ENCODE measurements at regions of chr12 and their contacts with region 1.

Region 1: DNA sequence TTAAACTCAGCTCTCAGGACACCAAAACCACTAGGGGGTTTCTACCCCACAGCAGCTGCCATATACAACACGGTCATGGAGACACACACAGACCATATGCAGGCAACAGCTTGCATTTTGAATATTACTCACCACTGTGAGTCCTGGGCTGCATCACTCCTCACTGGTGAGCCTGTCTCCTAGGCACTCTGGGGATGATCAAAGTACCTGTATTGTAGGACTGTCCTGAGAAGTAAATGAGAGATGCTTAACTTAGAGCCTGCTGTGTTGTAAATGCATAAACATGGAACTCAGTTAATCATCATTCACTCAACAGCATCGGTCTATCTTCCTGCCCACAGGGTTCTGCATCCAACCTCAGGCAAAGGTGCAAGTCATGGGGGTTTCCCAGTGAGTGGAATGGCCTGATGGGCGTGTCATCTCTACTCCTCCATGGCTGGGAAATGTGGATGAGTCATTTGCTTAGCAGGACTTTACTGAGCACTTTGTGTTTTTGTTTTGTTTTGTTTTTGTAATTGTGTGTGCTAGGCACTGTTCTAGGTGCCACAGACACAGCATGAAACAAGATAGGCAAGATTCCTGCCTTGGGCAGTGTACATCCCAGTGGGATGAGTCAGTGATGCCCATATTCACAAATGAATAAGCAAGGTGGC is 1141.2 kb upstream of the TMEM132C start:
- DNase-seq: peak; percentile 100
- H3K4me3 ChIP-seq: peak overlapping the region in 1 of 3 experiments; percentile 23
- H3K27ac ChIP-seq: peak overlapping the region; percentile 99
- H3K4me1 ChIP-seq: peaks cover 27% of the 10 kb centered on the region
- H3K27me3 ChIP-seq: no peaks in the 10 kb centered on the region
- CTCF ChIP-seq: peak in 1 of 2 donors; percentile 17

Region 2: DNA sequence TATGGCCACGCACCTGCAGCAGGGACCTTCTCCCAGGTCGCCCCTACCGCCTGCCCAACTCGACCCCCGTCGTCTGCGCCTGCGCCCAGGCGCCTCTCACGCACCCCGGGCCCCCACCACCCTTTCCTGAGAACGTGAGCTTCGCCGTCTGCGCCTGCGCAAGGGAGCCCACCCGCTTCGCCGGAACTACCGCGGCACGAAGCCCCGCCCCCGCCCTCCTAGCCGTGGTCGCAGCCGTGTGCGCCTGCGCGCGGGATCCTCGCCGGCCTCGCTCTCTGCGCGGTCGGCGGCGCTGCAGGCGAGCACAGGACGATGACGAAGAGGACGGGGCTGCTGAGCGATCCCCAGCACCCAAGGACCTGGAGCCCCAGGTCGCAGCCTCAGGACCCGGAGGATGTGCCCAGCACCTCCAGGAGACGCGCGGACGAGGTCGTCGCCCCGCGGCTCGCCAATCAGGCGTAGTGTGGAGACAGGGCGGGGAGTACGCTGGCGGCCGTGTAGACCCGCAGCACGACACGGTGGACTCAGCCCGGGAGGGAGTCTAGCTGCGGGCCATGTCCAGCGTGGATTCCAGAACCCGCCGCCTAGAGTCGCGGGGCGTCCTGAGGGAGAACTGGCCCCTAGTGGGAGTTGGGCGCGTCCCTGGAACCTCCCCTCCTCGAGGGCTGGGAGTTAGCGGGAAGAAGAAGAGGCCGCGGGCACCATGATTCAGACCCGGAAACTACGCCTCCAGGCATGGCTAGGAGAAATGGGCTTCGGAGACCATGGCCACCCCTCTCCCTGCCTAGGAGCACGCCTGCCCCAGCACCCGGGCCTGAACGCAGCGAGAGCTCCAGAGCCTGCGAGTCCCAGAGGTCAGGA is 20.4 kb after region 1 on chr12:
- CTCF ChIA-PET with region 1: no interaction called
- dilution Hi-C with region 1: no loop called
- in situ Hi-C with region 1: no loop called
- intact Hi-C with region 1: loop called (anchors 2 kb)
- DNase-seq: peak; percentile 46
- H3K4me3 ChIP-seq: peak overlapping the region; percentile 6 to 73 (median 55)
- H3K27ac ChIP-seq: peak overlapping the region; percentile 35
- H3K4me1 ChIP-seq: peaks cover 12% of the 10 kb centered on the region
- H3K27me3 ChIP-seq: no peaks in the 10 kb centered on the region
- CTCF ChIP-seq: peak in 1 of 2 donors; percentile 25

Region 3: DNA sequence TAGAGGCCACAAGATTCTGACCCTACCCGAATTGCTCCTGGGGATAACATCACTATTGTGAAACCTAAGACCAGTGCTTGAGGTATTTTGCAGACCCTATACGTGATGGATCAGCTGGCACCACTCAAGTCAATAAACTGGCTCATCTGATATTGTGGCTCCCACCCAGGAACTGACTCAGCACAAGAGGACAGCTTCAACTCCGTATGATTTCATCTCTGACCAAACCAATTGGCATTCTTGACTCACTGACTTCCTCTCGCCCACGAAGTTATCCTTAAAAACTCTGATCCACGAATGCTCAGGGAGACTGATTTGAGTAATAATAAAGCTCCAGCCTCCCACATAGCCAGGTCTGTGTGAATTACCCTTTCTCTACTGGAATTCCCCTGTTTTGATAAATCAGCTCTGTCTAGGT is 105.1 kb after region 1 on chr12:
- CTCF ChIA-PET with region 1: no interaction called
- dilution Hi-C with region 1: no loop called
- in situ Hi-C with region 1: no loop called
- intact Hi-C with region 1: loop called (anchors 1 kb)
- DNase-seq: peak; percentile 99
- H3K4me3 ChIP-seq: no peak overlapping the region
- H3K27ac ChIP-seq: peak overlapping the region; percentile 88
- H3K4me1 ChIP-seq: peaks cover 35% of the 10 kb centered on the region
- H3K27me3 ChIP-seq: no peaks in the 10 kb centered on the region
- CTCF ChIP-seq: no peak

Region 4: DNA sequence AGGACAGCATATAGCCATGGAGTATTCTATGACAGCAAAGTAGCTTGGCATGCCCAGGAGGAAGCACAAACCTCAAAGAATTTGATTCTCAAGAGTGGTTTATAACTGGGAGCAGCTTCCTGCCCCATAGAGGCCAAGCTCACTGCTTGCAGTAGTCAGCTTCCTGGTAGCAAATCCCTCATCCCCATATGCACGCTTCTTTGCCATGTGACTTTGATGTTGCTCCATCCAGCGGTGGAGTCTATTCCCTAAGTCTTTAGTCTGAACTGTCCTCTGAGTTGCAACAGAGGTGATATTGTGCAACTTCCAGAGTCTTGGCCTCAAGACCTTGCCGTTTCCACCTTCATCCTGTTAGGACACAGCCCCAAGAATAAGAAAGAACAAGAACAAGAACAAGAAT is 144.5 kb after region 1 on chr12:
- CTCF ChIA-PET with region 1: no interaction called
- dilution Hi-C with region 1: no loop called
- in situ Hi-C with region 1: no loop called
- intact Hi-C with region 1: loop called (anchors 1 kb)
- DNase-seq: peak; percentile 68
- H3K4me3 ChIP-seq: no peak overlapping the region
- H3K27ac ChIP-seq: peak overlapping the region; percentile 53
- H3K4me1 ChIP-seq: peaks cover 45% of the 10 kb centered on the region
- H3K27me3 ChIP-seq: no peaks in the 10 kb centered on the region
- CTCF ChIP-seq: no peak

Region 5: GRCh38 chr12:127355061-127355841 is 229.5 kb after region 1 on chr12:
- CTCF ChIA-PET with region 1: interaction called, 4 read pairs
- dilution Hi-C with region 1: no loop called
- in situ Hi-C with region 1: no loop called
- intact Hi-C with region 1: loop called (anchors 1 kb)
- DNase-seq: peak; percentile 17
- H3K4me3 ChIP-seq: no peak overlapping the region
- H3K27ac ChIP-seq: no peak overlapping the region
- H3K4me1 ChIP-seq: no peaks in the 10 kb centered on the region
- H3K27me3 ChIP-seq: no peaks in the 10 kb centered on the region
- CTCF ChIP-seq: peak; percentile 87 to 95

Region 6: DNA sequence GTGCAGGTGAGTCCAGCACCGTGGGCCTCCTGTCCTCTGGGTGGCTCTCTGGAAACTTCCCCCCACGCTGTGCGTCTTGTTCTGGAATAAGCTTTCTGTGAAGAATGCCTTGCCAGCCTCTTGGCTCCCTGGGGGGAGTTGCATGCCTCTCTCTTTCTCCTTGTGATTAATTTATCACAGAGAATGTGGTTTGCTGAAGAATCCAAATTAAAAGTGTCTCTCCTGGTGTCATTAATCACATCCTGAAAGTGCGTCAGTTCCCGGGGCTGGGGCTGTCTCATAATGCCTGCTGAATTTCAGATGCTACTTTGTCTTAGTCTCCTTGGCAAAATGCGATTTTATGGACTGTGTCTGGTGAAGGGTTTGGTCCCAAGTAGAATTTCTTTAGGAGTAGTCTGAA is 353.5 kb after region 1 on chr12:
- CTCF ChIA-PET with region 1: no interaction called
- dilution Hi-C with region 1: no loop called
- in situ Hi-C with region 1: no loop called
- intact Hi-C with region 1: no loop called
- DNase-seq: no peak
- H3K4me3 ChIP-seq: no peak overlapping the region
- H3K27ac ChIP-seq: no peak overlapping the region
- H3K4me1 ChIP-seq: no peaks in the 10 kb centered on the region
- H3K27me3 ChIP-seq: no peaks in the 10 kb centered on the region
- CTCF ChIP-seq: no peak

Measured in mammary epithelial cell (primary cell).